Gastrocnemius medialis (tissue), 4 donors: ENCODE measurements at regions of chr7 and their contacts with region 1.

Region 1: GRCh38 chr7:23357190-23358093 is 58.3 kb downstream of the MALSU1 start:
- DNase-seq: no peak
- ATAC-seq: no peak
- H3K4me3 ChIP-seq: no peak overlapping the region
- H3K27ac ChIP-seq: no peak overlapping the region
- H3K4me1 ChIP-seq: no peaks in the 10 kb centered on the region
- H3K27me3 ChIP-seq: no peaks in the 10 kb centered on the region
- CTCF ChIP-seq: no peak
- POLR2A ChIP-seq: no peak

Region 2: GRCh38 chr7:23462846-23463245 is 105.4 kb after region 1 on chr7:
- in situ Hi-C with region 1: no loop called
- intact Hi-C with region 1: loop called (anchors 5 kb)
- DNase-seq: peak in 1 of 2 donors; percentile 20
- ATAC-seq: peak; percentile 98 to 99
- H3K4me3 ChIP-seq: no peak overlapping the region
- H3K27ac ChIP-seq: no peak overlapping the region
- H3K4me1 ChIP-seq: peaks cover 0 to 8% of the 10 kb centered on the region in 2 donors
- H3K27me3 ChIP-seq: peaks cover 34 to 48% (median 39%) of the 10 kb centered on the region in 3 donors
- CTCF ChIP-seq: peak in 3 of 5 experiments; percentile 4 to 41 (median 26)
- POLR2A ChIP-seq: no peak

Region 3: DNA sequence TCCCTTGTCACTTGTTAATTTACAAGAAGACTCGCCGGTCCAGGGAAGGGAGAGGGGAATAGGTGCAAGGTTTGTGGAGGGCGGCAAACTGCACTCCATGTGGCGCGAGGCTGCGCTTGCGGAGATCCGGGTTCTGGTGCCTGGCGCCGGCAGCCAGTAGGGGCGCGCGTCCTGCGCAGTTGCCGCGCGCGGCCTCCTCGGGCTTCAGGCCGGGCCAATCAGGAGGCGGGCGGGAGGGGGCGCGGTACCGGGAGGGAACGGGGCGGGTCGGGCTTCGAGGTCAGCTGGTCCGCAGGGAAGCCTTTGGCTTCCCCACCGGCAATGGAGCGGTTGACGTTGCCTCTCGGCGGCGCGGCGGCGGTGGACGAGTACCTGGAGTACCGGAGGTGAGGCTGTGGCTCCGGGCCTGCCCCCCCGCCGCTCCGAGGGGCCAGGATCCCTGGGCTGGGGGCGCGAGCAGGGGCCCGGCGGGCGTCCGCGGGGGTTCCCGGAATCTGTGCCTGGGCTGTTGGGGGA is 322.5 kb after region 1 on chr7 and contains the start of gene FAM221A:
- in situ Hi-C with region 1: no loop called
- intact Hi-C with region 1: no loop called
- DNase-seq: peak; percentile 81 to 83
- ATAC-seq: peak; percentile 94 to 96
- H3K4me3 ChIP-seq: peak within 1 kb of the TSS; percentile 61 to 94 (median 90)
- H3K27ac ChIP-seq: peak within 1 kb of the TSS; percentile 73 to 87 (median 84)
- H3K4me1 ChIP-seq: peaks cover 4 to 8% of the 10 kb centered on the region in 2 donors
- H3K27me3 ChIP-seq: no peaks in the 10 kb centered on the region
- CTCF ChIP-seq: peak; percentile 28 to 88 (median 51)
- POLR2A ChIP-seq: no peak
- total RNA-seq, gene FAM221A: 2.2 to 3.8 (median 2.5) TPM